ENCODE measurements at regions of chr1 and their contacts with region 1.

Region 1: GRCh38 chr1:201053158-201053860 is 29.8 kb upstream of the KIF21B start:
- DNase-seq: peak; percentile 16
- H3K4me3 ChIP-seq: no peak overlapping the region
- H3K27ac ChIP-seq: no peak overlapping the region
- H3K4me1 ChIP-seq: peaks cover 10% of the 10 kb centered on the region
- CTCF ChIP-seq: no peak

Region 2: GRCh38 chr1:200053646-200054045 is 999.7 kb before region 1 on chr1:
- CTCF ChIA-PET with region 1: interaction called, 10 read pairs
- POLR2A ChIA-PET with region 1: no interaction called
- intact Hi-C with region 1: no loop called
- DNase-seq: no peak
- H3K4me3 ChIP-seq: no peak overlapping the region
- H3K27ac ChIP-seq: no peak overlapping the region
- H3K4me1 ChIP-seq: no peaks in the 10 kb centered on the region
- CTCF ChIP-seq: no peak

Region 3: DNA sequence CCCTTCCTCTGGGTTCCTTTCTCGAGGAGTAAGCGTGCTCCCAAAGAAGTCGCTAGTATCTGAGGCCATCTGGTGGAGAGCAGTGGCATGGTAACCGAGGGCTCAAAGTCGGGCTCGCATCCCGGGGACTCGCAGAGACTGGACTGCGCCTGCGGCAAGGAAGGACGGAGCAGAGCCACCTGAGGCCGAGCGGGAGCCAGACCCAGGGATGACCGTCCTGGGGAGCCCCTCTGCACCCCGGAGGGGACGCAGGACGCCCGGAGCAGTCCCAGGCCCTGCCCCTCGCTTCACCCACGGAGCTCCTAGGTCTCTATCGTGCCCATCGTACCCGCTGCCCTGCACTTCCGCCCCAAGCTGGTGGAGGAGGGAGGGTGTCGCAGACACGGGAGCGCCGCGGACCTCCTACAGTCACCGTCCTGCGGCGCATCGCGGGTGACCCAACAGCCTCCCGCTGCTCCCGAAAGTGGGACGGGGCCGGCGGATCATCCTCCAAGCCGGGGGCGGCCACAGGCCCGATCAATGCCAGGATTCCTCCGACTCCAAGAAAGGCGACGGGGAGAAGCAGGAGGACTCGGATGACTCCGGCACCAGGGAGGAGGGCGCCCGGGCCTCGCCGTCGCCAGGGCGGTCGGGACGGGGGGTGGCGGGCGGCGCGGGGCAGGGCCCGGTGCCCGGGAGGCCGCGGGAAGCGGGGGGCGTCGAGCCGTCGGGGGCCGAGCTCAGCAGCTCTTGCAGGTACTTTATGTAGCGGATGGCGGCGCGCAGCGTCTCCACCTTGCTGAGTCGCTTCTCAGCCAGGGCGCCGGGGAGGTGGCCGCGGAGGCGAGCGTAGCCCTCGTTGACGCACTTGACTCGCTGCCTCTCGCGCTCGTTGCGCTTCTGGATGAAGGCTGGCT is 61.2 kb after region 1 on chr1:
- CTCF ChIA-PET with region 1: no interaction called
- POLR2A ChIA-PET with region 1: no interaction called
- intact Hi-C with region 1: loop called (anchors 5 kb)
- DNase-seq: peak; percentile 55
- H3K4me3 ChIP-seq: no peak overlapping the region
- H3K27ac ChIP-seq: no peak overlapping the region
- H3K4me1 ChIP-seq: peaks cover 5% of the 10 kb centered on the region
- CTCF ChIP-seq: peak; percentile 73

Region 4: GRCh38 chr1:201648066-201648906 is 595.0 kb after region 1 on chr1:
- CTCF ChIA-PET with region 1: no interaction called
- POLR2A ChIA-PET with region 1: no interaction called
- intact Hi-C with region 1: no loop called
- DNase-seq: no peak
- H3K4me3 ChIP-seq: no peak overlapping the region
- H3K27ac ChIP-seq: no peak overlapping the region
- H3K4me1 ChIP-seq: peaks cover 3% of the 10 kb centered on the region
- CTCF ChIP-seq: no peak